Head of caudate nucleus (tissue), 42 donors: ENCODE measurements at regions of chr2 and their contacts with region 1.

Region 1: DNA sequence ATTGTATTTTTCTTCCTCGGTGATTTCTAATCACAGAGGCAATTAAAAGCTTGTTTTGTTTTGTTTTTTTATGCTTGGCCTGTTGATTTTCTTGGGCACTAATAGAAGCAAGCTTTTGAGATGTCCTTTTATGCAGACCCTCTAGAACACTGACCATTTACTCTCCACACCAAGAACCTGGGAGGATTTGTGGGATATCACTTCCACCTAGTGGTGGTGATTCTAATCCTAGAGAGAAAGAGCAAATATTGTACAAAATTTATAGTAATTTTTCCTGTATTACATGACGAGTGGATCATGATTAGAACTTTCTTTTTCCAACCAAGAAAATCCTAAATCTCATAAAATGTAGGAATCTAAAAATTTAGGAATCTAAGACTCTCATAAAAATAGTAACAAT is 23.4 kb downstream of the NEMP2 start:
- DNase-seq: peak in 5 of 42 donors; percentile 47 to 68 (median 51)

Region 2: GRCh38 chr2:190319555-190320498 is 191.3 kb before region 1 on chr2 and contains the start of gene HIBCH:
- intact Hi-C with region 1: loop called (anchors 10 kb)
- DNase-seq: peak; percentile 95 to 100 (median 99)

Region 3: DNA sequence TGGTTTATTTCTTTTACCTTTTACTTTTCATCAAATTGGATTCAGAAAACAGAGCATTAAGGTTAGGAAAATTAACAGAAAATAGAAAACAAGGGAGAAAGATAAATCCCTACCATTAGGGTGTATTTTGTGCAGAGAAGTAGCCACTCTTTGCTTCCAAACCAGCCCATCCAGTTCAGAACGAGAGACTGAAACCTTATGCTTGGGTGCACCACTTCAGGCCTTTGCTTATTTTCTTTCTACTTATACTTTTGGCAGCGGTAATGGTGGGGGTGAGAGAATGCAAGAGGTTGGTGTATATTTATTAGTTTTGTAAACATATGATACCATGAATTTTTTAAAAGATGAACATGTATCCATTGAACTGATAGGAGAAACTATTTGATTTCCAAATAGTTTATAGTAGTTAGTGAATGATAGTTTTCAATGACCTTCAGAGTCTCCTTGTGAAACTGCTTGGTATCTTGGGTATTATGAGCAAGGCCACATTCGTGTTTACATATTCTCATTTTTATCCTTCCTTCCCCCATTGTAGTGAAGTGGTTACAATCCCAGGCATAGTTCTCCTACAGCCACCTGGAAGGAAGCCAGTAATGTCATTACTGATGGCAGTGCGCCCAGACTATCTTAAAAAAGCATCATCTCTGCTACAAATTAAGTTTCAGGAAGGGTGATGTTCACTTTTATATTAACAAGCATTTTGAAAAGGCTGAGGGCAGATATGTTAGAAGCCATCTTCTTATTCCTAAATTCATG is 42.1 kb before region 1 on chr2:
- intact Hi-C with region 1: no loop called
- DNase-seq: peak in 31 of 42 donors; percentile 21 to 82 (median 50)

Region 4: GRCh38 chr2:190563109-190563508 is 52.0 kb after region 1 on chr2:
- intact Hi-C with region 1: no loop called
- DNase-seq: no peak